ENCODE measurements at regions of chr1 and their contacts with region 1.

Region 1: DNA sequence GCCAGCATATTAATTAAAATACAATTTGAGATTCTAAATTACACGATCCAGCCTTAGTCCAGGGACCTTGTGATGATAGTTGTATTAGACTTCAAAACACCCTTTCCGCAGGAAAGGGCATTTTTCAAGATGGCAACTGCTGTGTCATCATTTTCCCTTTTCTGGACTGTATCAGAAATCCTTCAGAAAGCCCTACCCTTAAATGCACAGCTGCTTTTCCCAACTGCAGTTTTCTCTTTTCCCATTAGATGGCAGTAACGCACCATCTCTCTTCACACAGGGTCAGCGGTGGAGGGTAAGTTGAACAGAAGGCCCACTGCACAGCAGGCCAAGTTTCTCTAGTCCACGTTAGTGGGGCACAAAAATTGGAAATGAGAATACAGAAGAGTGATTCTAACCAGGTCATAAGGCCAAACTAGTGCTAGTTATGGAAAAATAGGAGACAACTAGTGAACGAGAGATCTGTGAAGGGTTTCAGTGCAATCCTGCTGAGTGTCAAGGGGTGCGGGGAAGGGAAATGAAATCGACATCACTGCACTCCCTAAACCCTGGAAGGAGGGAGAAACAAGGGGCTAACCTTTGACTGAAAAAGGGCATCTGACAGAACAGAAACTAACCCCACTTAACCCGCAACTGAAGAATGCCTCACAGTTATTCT is 22.1 kb upstream of the TDRD10 start:
- DNase-seq: peak; percentile 80 to 87 (median 82)
- ATAC-seq: peak; percentile 98
- H3K4me3 ChIP-seq: no peak overlapping the region
- H3K27ac ChIP-seq: no peak overlapping the region
- H3K4me1 ChIP-seq: peaks cover 0 to 4% of the 10 kb centered on the region in 2 experiments; a peak in 1 of 5 replicates
- H3K27me3 ChIP-seq: peaks cover under 1 to 7% of the 10 kb centered on the region in 2 experiments; a peak in 1 of 5 replicates
- CTCF ChIP-seq: peak; percentile 91 to 97 (median 94)
- EP300 ChIP-seq: 0 out of 2 replicates have a peak, but pooled peaks have one; percentile 7
- POLR2A ChIP-seq: no peak
- RAD21 ChIP-seq: peak; percentile 97 to 99

Region 2: GRCh38 chr1:154344977-154345837 is 134.7 kb before region 1 on chr1:
- CTCF ChIA-PET with region 1: interaction called, 3 read pairs
- POLR2A ChIA-PET with region 1: no interaction called
- in situ Hi-C with region 1: no loop called
- intact Hi-C with region 1: loop called (anchors 1 kb)
- DNase-seq: peak; percentile 61 to 86 (median 66)
- ATAC-seq: peak; percentile 82
- H3K4me3 ChIP-seq: no peak overlapping the region
- H3K27ac ChIP-seq: no peak overlapping the region
- H3K4me1 ChIP-seq: peaks cover 0 to 15% of the 10 kb centered on the region in 2 experiments; a peak in 3 of 5 replicates
- H3K27me3 ChIP-seq: no peaks in the 10 kb centered on the region
- CTCF ChIP-seq: peak; percentile 78 to 91 (median 90)
- EP300 ChIP-seq: no peak
- POLR2A ChIP-seq: no peak
- RAD21 ChIP-seq: peak; percentile 65 to 79

Region 3: DNA sequence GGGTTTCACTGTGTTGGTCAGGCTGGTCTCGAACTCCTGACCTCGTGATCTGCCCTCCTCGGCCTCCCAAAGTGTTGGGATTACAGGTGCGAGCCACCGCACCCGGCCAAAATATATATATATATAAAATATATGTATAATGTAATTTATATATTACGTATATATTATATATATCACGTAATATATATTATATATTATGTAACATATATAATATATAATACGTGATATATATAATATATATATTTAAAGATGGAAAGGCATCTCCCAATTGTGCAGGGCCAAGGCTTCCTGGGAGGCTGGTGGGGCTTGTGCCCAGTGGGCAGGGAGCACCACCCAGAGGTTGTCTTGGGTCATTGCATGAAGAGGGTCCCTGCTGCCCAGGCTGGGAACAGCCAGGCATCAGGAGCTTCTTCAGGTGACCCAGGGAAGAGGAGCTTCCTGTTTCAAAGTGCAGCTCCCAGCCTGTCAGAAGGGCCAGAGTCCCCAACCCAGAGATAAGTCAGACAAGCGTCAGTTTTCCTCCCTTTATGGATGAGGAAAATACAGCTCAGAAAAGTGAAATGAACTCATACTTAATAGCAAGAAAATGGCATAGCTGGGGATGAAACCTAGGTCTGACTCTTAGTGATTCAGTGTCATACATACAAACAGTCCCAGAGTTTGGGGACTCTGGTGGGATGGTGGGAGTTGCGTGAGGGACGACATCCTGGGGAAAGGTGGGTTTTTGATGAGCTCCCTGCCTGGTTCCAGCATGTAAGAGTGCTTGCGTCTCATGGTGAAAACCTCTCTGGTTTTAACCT is 66.6 kb after region 1 on chr1:
- CTCF ChIA-PET with region 1: interaction called, 45 read pairs
- POLR2A ChIA-PET with region 1: no interaction called
- in situ Hi-C with region 1: no loop called
- intact Hi-C with region 1: loop called (anchors 1 kb)
- DNase-seq: peak; percentile 71 to 81 (median 79)
- ATAC-seq: peak; percentile 94
- H3K4me3 ChIP-seq: no peak overlapping the region
- H3K27ac ChIP-seq: no peak overlapping the region
- H3K4me1 ChIP-seq: no peaks in the 10 kb centered on the region; a peak in 2 of 5 replicates
- H3K27me3 ChIP-seq: peaks cover 17 to 34% of the 10 kb centered on the region in 2 experiments
- CTCF ChIP-seq: peak; percentile 82 to 93 (median 88)
- EP300 ChIP-seq: no peak
- POLR2A ChIP-seq: no peak
- RAD21 ChIP-seq: peak; percentile 91 to 95

Region 4: GRCh38 chr1:154760469-154760933 is 280.6 kb after region 1 on chr1:
- CTCF ChIA-PET with region 1: interaction called, 10 read pairs
- POLR2A ChIA-PET with region 1: no interaction called
- in situ Hi-C with region 1: no loop called
- intact Hi-C with region 1: no loop called
- DNase-seq: peak; percentile 72 to 83 (median 82)
- ATAC-seq: peak; percentile 99
- H3K4me3 ChIP-seq: peak overlapping the region; percentile 35
- H3K27ac ChIP-seq: no peak overlapping the region
- H3K4me1 ChIP-seq: peaks cover 0 to 8% of the 10 kb centered on the region in 2 experiments; a peak in 2 of 5 replicates
- H3K27me3 ChIP-seq: peaks cover 10 to 38% of the 10 kb centered on the region in 2 experiments; a peak in 4 of 5 replicates
- CTCF ChIP-seq: peak; percentile 59 to 81 (median 74)
- EP300 ChIP-seq: no peak
- POLR2A ChIP-seq: no peak
- RAD21 ChIP-seq: peak; percentile 37 to 71

Region 5: DNA sequence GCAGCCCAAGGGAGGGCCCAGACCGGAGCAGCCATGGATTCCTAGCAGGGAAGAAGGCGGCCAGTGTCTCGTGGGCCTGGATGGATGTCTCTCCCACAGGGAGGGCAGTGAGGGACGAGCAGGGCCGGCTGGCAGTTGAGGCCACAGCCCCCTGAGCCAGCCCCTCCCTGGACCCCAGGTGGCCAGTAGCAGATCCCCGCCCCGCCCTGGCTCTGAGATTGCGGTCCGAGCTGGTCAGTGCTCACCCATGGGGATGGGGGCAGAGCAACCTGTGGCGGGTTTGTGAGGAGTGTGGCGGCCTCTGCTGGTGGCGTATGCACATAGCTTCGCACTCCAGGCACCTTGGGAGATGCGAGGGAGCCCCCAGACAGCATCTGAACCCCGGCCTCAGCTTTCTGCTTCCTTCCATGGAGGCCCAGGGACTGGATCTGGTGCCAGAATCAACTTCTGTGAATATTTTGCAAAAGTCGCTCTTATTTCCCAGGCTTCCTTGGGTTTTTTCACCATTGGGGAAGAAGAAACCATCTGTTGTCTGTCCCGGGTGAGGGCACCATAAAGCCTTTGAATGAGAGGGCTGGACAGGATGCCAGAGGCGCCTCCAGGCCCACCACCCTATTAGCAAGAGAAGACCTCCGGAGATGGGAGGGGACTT is 398.6 kb after region 1 on chr1:
- CTCF ChIA-PET with region 1: interaction called, 3 read pairs
- POLR2A ChIA-PET with region 1: no interaction called
- in situ Hi-C with region 1: no loop called
- intact Hi-C with region 1: loop called (anchors 5 kb)
- DNase-seq: peak; percentile 80 to 85 (median 81)
- ATAC-seq: peak; percentile 99
- H3K4me3 ChIP-seq: no peak overlapping the region
- H3K27ac ChIP-seq: no peak overlapping the region
- H3K4me1 ChIP-seq: peaks cover under 1 to 8% of the 10 kb centered on the region in 2 experiments; a peak in 4 of 5 replicates
- H3K27me3 ChIP-seq: peaks cover 0 to 30% of the 10 kb centered on the region in 2 experiments; a peak in 2 of 5 replicates
- CTCF ChIP-seq: peak; percentile 91 to 94 (median 94)
- EP300 ChIP-seq: no peak
- POLR2A ChIP-seq: no peak
- RAD21 ChIP-seq: peak; percentile 92 to 97